Posterior vena cava (tissue), 2 donors: ENCODE measurements at regions of chr11 and their contacts with region 1.

Region 1: DNA sequence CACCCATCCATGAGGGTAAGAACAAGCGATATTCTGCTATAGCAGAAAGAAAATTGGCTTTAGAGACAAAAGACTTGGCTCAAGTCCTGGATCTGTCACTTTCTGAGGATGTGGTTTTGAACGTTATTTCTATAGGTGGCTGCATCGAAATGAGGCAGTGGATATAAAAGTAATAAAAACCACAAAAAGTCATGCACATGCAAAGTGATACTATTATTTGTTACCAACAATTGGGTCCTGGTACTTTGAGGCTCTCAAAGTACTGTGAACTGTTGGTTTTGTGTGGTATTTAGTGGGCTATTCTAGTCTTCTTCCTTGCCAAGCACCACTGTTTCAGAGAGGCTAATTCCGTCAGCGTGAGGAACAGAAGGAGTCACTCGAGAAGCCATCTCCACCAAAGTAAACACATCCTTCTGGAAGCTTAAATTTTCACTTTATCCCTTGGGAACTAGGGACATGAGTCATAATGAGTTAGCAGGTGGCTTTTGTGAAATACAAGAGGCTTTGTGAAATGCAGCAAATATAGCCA is 13.1 kb downstream of the UBASH3B start:
- DNase-seq: no peak

Region 2: DNA sequence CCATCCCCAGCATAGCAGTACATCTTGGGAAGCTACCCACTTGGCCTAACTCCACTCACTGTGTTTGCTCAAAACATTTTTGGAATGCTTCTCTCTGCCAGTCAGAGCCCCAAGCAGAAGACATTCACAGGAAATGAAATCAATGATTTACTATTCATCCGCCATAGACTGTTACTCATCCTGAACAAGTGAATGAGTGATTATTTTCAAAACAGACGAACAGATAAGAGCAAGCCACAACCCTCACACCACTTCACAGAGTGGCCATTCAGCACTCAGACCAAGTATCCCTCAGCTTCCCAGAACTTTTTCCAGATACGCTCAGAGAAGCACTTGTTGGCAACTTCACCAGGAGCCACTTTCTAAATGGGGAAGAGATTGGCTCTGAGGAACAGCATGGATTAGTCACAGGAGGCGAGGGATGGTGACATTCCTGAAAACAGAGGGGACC is 26.1 kb before region 1 on chr11:
- intact Hi-C with region 1: loop called in 1 of 2 experiments (anchors 1 kb)
- DNase-seq: no peak